H1 (cell line): ENCODE measurements at regions of chr19 and their contacts with region 1.

Region 1: DNA sequence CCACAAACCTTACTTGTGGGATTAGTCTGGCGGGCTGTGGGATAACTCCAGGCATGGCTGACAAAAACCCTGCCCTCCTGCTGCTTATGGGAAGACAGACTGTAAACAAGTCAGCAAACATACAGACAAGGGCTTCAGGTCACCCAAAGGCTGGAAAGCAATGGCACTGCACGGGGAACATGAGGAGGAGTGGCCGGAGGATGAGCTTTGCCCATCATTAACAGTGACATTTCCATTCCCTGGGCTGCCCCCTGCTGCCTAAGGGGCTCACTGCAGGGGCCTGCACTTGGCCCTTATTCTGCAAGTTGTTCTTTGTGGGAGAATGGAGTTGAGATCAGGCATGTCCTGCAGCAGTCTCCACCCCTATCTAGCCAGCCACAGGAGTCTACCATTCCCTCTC is 91.3 kb downstream of the UQCRFS1 start:
- DNase-seq: peak; percentile 13 to 80
- H3K4me3 ChIP-seq: no peak overlapping the region
- H3K27ac ChIP-seq: no peak overlapping the region
- H3K4me1 ChIP-seq: no peaks in the 10 kb centered on the region
- H3K27me3 ChIP-seq: no peaks in the 10 kb centered on the region
- CTCF ChIP-seq: peak; percentile 69 to 80 (median 69)
- EP300 ChIP-seq: no peak
- POLR2A ChIP-seq: no peak
- RAD21 ChIP-seq: peak; percentile 61 to 73

Region 2: DNA sequence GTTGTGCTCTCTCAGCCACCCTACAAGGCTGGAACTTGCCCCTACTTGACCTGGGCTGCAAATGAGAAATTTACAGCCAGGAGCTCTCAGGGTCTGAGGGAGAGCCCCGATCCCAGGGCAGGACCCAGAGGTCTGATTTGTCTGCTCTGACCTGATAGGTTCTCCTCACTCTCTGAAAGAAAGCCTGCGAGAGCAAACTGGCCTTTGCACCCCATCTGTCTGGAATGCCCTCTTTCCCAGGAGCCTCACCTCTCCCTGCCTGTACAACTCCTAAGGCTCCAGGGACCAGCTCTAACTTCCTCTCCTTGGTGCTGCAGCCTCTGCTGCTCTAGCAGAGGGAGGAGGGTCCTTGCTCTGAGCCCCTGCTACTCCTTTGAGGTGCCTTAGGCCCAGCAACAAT is 46.5 kb before region 1 on chr19:
- CTCF ChIA-PET with region 1: interaction called, 12 read pairs
- POLR2A ChIA-PET with region 1: no interaction called
- DNase-seq: no peak
- H3K4me3 ChIP-seq: no peak overlapping the region
- H3K27ac ChIP-seq: no peak overlapping the region
- H3K4me1 ChIP-seq: peaks cover 0 to 6% (median 1%) of the 10 kb centered on the region in 4 experiments; a peak in 3 of 7 replicates
- H3K27me3 ChIP-seq: no peaks in the 10 kb centered on the region
- CTCF ChIP-seq: no peak
- EP300 ChIP-seq: no peak
- POLR2A ChIP-seq: no peak
- RAD21 ChIP-seq: no peak

Region 3: DNA sequence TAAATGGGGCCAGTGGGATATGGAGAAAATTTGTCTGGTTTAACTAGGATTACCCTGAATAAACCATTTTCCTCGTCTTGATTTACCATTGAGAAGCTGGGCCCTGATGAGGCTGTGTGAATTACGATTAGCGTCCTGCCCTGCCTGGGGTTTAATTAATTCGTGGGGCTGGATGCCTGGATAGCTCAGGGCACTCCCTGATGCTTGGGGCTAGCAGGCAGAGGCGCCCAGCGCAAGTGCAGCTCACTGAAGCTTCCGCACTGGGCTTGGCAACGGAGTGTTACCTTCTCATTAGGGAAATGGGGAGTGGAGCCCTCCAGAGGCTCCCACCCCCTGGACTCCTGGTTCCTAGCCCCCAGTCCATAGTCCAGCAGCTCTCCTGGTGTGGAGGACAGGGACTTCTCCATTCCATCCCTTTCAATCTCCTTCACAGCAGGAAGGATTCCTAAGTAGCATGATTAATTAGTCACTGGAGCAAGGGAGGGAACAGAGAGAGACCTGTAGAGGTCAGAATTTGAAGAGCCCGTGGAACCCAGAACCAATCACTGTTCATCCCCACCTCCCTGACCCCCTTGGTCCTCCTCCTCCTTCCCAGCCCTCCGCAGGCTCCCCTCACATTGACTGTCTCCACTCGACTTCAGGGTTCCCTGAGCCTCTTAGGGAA is 15.9 kb before region 1 on chr19:
- CTCF ChIA-PET with region 1: interaction called, 54 read pairs
- POLR2A ChIA-PET with region 1: no interaction called
- DNase-seq: no peak
- H3K4me3 ChIP-seq: no peak overlapping the region
- H3K27ac ChIP-seq: no peak overlapping the region
- H3K4me1 ChIP-seq: peaks cover 0 to 3% (median under 1%) of the 10 kb centered on the region in 4 experiments; a peak in 2 of 7 replicates
- H3K27me3 ChIP-seq: no peaks in the 10 kb centered on the region
- CTCF ChIP-seq: no peak
- EP300 ChIP-seq: no peak
- POLR2A ChIP-seq: no peak
- RAD21 ChIP-seq: no peak

Region 4: GRCh38 chr19:29154163-29154562 is 32.5 kb after region 1 on chr19:
- CTCF ChIA-PET with region 1: no interaction called
- POLR2A ChIA-PET with region 1: no interaction called
- DNase-seq: no peak
- H3K4me3 ChIP-seq: no peak overlapping the region
- H3K27ac ChIP-seq: no peak overlapping the region
- H3K4me1 ChIP-seq: no peaks in the 10 kb centered on the region
- H3K27me3 ChIP-seq: no peaks in the 10 kb centered on the region
- CTCF ChIP-seq: no peak
- EP300 ChIP-seq: no peak
- POLR2A ChIP-seq: no peak
- RAD21 ChIP-seq: no peak

Region 5: DNA sequence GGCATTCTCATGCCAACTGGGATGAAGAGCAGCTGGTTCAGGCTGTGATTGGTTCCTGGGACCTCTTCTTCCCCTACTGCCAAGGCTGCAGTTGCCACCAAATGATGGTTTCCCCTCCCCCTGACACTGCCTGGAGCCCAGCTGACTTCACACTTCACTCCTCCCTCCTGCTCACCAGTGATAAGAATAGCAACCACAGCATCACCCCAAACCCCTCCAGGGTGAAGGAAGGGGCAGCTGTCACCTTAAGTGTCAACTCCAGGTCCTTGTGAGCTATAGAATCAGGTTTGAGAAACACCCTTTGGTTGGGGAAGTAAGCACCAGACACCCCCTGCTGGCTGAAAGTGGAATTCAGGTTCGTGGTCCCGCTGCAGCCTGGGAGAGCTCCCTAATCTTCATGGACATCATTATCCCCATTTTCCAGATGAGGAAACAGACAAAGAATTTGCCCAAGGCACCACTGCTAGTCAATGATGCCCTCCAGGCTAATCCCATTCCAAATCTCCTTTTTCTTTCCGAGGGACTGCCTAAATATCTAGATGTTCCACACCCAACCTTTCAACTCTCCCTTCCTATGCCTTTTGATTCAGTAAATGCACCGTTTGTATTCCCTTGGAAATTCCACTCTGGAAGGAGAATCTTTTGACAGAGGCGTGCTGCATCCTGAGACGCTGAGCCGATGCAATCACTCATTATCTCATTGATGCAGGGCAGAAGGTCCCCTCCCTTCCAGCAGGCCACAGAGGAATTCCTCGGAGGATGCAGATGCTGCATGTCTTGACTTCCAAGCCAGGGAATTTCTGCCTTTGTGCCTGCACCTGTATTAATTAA is 141.8 kb after region 1 on chr19:
- CTCF ChIA-PET with region 1: interaction called, 21 read pairs
- POLR2A ChIA-PET with region 1: no interaction called
- DNase-seq: peak in 1 of 2 experiments; percentile 91
- H3K4me3 ChIP-seq: no peak overlapping the region
- H3K27ac ChIP-seq: no peak overlapping the region
- H3K4me1 ChIP-seq: peaks cover 0 to 3% (median 0%) of the 10 kb centered on the region in 4 experiments; a peak in 4 of 7 replicates
- H3K27me3 ChIP-seq: no peaks in the 10 kb centered on the region; a peak in 2 of 7 replicates
- CTCF ChIP-seq: peak; percentile 75 to 86 (median 85)
- EP300 ChIP-seq: no peak
- POLR2A ChIP-seq: no peak
- RAD21 ChIP-seq: peak; percentile 76 to 80